ENCODE measurements at regions of chr3 and their contacts with region 1.

Region 1: GRCh38 chr3:30199096-30199759 is 407.2 kb upstream of the TGFBR2 start:
- DNase-seq: peak; percentile 55
- ATAC-seq: peak; percentile 40; the same call in 1 of the 2 replicates
- H3K4me3 ChIP-seq: no peak overlapping the region
- H3K27ac ChIP-seq: no peak overlapping the region
- H3K4me1 ChIP-seq: peaks cover 6% of the 10 kb centered on the region
- H3K27me3 ChIP-seq: no peaks in the 10 kb centered on the region
- CTCF ChIP-seq: peak; percentile 84
- POLR2A ChIP-seq: no peak
- RAD21 ChIP-seq: peak; percentile 83

Region 2: GRCh38 chr3:29789686-29790085 is 409.5 kb before region 1 on chr3:
- CTCF ChIA-PET with region 1: no interaction called
- POLR2A ChIA-PET with region 1: no interaction called
- dilution Hi-C with region 1: no loop called
- in situ Hi-C with region 1: no loop called
- intact Hi-C with region 1: loop called (anchors 5 kb)
- DNase-seq: peak; percentile 47
- ATAC-seq: no peak
- H3K4me3 ChIP-seq: no peak overlapping the region
- H3K27ac ChIP-seq: no peak overlapping the region
- H3K4me1 ChIP-seq: no peaks in the 10 kb centered on the region
- H3K27me3 ChIP-seq: no peaks in the 10 kb centered on the region
- CTCF ChIP-seq: no peak
- POLR2A ChIP-seq: no peak
- RAD21 ChIP-seq: no peak

Region 3: GRCh38 chr3:30035935-30036567 is 163.2 kb before region 1 on chr3:
- CTCF ChIA-PET with region 1: interaction called, 3 read pairs
- POLR2A ChIA-PET with region 1: no interaction called
- dilution Hi-C with region 1: no loop called
- in situ Hi-C with region 1: loop called (anchors 10 kb)
- intact Hi-C with region 1: no loop called
- DNase-seq: no peak
- ATAC-seq: no peak
- H3K4me3 ChIP-seq: no peak overlapping the region
- H3K27ac ChIP-seq: no peak overlapping the region
- H3K4me1 ChIP-seq: no peaks in the 10 kb centered on the region
- H3K27me3 ChIP-seq: peaks cover 3% of the 10 kb centered on the region; the same call in 1 of the 2 replicates
- CTCF ChIP-seq: no peak
- POLR2A ChIP-seq: no peak
- RAD21 ChIP-seq: no peak

Region 4: DNA sequence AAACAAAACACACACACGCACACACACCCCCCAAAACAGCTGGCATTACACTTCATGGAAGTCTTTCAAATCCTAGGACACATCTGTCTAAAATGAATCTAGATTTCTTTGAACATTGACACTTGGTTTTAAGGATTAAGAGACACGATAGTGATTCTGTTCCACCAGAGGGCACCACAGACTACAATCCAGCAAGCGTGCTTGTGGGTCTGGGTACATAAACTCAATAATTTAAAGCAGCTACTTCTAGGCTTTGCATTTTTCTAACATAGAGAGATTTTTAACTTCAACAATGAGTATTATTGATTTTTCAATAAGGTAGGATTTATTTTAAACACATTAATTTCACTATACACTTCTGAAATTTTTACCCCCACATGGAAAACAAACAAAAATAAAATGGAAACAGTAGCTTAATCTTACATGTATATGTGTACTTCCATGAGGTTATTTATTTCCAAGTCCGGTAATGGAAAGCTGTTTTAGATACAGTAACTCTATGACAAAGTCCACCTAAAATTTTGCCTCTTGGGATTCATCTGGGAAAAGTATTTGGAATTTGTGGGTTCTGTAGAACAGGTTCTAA is 156.9 kb before region 1 on chr3:
- CTCF ChIA-PET with region 1: interaction called, 16 read pairs
- POLR2A ChIA-PET with region 1: no interaction called
- dilution Hi-C with region 1: no loop called
- in situ Hi-C with region 1: loop called (anchors 10 kb)
- intact Hi-C with region 1: loop called (anchors 1 kb)
- DNase-seq: peak; percentile 79
- ATAC-seq: peak; percentile 81
- H3K4me3 ChIP-seq: no peak overlapping the region
- H3K27ac ChIP-seq: no peak overlapping the region
- H3K4me1 ChIP-seq: no peaks in the 10 kb centered on the region
- H3K27me3 ChIP-seq: no peaks in the 10 kb centered on the region
- CTCF ChIP-seq: peak; percentile 88
- POLR2A ChIP-seq: no peak
- RAD21 ChIP-seq: peak; percentile 92

Region 5: GRCh38 chr3:30112902-30113484 is 86.2 kb before region 1 on chr3:
- CTCF ChIA-PET with region 1: interaction called, 4 read pairs
- POLR2A ChIA-PET with region 1: no interaction called
- dilution Hi-C with region 1: no loop called
- in situ Hi-C with region 1: loop called (anchors 5 kb)
- intact Hi-C with region 1: loop called (anchors 2 kb)
- DNase-seq: peak; percentile 59
- ATAC-seq: peak; percentile 78
- H3K4me3 ChIP-seq: no peak overlapping the region
- H3K27ac ChIP-seq: no peak overlapping the region
- H3K4me1 ChIP-seq: no peaks in the 10 kb centered on the region
- H3K27me3 ChIP-seq: no peaks in the 10 kb centered on the region; the same call in none of the 2 replicates
- CTCF ChIP-seq: peak; percentile 72
- POLR2A ChIP-seq: no peak
- RAD21 ChIP-seq: peak; percentile 82